Activated CD4-positive, alpha-beta memory T cell treated with anti-CD3 and anti-CD28 coated beads, Interleukin-2, amount 10 ng/mL, durations not matched to agents 7 days and 5 days (primary cell): ENCODE measurements at regions of chr6 and their contacts with region 1.

Region 1: DNA sequence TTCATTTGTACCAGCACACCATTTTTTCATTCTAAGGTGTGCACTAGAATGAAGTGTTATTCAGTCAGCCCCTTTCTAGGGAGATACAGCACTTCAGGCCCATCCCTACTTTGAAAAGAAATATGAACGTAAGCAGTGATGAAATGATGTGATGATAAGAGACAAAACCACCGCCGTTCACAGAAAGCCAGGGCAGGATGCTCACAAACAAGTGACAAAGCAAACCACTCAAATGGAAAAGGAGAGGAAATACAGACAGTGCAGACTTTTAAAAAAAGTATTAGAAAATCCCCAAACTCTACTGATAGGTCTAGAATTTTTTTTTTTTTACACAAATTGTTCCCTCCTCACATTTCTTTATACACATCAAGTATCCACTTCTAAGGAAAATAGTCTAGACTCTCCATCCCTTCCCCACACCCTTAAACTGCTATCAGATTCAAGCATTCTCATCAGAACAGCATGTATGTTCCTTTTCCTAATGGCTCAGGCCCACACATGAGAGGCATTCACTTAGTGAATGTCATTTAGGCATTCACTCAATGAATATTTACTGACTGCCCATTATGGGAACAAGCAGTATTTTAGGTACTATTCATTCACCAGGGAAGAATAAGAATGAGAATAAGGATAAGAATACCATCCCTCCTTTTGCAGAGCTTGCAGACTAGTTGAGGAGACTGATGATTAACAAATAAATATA is 243.5 kb downstream of the GMPR start:
- DNase-seq: peak; percentile 80
- H3K4me3 Mint-ChIP-seq: peak overlapping the region; percentile 46
- H3K27ac Mint-ChIP-seq: peak overlapping the region; percentile 94
- H3K4me1 Mint-ChIP-seq: peaks cover 94% of the 10 kb centered on the region
- H3K27me3 Mint-ChIP-seq: no peaks in the 10 kb centered on the region

Region 2: DNA sequence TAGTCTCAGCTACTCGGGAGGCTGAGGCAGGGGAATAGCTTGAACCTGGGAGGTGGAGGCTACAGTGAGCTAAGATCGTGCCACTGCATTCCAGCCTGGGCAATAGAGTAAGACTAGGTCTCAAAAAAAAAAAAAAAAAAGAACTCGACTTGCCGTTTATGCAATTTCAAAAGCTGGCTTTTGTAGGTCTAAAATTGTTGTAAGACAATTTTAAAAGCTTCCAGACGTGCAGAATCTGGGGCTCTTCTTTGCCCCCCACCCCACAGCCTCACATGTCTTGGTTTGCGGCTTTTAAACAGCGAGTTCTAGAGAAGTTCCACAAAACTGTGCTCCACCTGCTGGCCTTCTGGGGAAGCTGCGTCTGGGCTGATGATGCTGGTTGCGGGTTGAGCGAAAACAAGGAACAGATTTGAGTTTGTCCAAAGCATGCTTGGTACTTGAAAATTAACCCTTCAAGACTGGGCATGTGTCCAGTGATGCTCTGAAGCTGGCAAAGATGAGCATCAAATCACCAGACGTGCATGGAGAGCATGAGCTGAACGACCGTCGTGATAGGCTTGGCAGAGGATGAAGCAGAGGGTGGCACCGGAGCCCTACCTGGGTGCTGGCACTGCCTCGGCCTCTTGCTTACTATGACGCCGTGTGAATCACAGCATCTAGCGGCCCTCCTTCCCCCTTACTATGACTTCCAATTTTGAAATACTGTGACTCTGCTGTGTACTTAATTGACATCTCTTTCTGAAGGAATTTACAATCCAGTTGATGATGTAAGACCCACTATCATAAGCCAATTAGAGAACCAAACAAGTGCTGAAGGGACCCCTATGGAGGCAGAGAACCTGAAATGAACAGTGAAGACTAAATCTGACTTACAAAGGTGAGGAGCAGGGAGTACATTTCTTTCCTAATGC is 72.1 kb before region 1 on chr6:
- CTCF ChIA-PET with region 1: interaction called, 5 read pairs
- POLR2A ChIA-PET with region 1: interaction called, 16 read pairs
- DNase-seq: peak; percentile 73
- H3K4me3 Mint-ChIP-seq: peak overlapping the region; percentile 63
- H3K27ac Mint-ChIP-seq: peak overlapping the region; percentile 73
- H3K4me1 Mint-ChIP-seq: peaks cover 65% of the 10 kb centered on the region
- H3K27me3 Mint-ChIP-seq: no peaks in the 10 kb centered on the region

Region 3: DNA sequence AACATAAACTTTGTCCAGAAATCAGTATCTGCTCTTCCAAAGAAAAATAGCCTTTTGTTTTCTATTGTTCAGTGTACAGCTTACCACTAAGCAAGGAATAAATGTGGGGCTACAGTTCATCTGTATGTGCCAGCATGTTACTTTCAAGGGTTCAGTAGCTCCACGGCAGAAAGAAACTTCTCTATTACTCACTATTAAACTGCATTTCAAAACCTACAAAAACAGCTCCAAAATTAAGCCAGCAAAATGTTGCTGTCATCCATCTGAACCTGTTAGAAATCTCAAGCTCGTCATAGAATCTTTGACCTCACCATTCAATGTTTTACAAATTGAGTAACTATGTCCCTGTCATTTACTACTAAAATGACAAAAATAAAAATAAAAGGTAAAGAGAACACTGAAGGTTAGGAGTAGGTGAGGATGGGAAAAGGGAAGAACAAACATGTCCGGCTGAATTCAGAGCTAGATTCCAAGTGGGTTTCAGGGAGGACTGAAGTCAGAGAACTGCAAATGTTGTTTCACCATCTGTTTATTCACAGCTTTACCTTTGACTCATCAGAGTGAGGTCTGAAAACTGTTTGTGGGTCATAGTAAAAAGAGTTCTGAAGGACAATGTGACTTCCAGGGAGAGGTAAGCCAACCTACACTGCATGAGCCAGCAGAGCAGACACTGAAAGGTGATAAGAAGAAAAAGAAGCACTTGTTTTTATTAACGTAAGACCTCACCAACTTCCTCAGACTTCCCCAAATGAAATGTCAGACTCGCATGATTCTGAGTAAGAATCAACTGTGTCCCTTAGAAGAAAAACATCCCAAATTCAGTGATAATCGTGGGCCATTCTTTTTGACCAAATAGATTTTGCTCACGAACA is 217.4 kb after region 1 on chr6:
- CTCF ChIA-PET with region 1: no interaction called
- POLR2A ChIA-PET with region 1: interaction called, 10 read pairs
- DNase-seq: no peak
- H3K4me3 Mint-ChIP-seq: peak overlapping the region; percentile 78
- H3K27ac Mint-ChIP-seq: peak overlapping the region; percentile 96
- H3K4me1 Mint-ChIP-seq: peaks cover 83% of the 10 kb centered on the region
- H3K27me3 Mint-ChIP-seq: no peaks in the 10 kb centered on the region